ENCODE measurements at regions of chr7 and their contacts with region 1.

Region 1: DNA sequence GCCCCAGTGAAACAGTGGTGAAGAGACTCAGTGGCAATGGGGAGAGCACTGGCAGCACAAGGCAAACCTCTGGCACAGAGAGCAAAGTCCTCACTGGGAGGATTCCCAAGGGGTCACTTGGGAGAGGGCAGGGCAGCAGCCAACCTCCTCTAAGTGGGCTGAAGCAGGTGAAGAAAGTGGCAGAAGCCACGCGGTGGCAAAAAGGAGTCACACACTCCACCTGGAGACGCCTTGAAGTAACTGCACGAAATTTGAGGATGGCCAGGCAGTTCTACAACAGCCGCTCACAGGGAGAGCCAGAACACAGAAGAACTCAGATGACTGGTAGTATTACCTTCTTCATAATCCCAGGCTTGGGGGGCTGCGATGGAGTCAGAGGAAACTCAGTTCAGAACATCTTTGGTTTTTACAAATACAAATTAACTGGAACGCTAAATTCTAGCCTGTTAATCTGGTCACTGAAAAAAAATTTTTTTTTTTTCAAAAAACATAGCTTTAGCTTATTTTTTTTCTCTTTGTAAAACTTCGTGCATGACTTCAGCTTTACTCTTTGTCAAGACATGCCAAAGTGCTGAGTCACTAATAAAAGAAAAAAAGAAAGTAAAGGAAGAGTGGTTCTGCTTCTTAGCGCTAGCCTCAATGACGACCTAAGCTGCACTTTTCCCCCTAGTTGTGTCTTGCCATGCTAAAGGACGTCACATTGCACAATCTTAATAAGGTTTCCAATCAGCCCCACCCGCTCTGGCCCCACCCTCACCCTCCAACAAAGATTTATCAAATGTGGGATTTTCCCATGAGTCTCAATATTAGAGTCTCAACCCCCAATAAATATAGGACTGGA is 435 bp upstream of the IL6 start:
- DNase-seq: peak; percentile 76
- ATAC-seq: peak; percentile 88 to 92
- H3K4me3 ChIP-seq: 0 out of 3 replicates have a peak overlapping the region, but pooled peaks have one; percentile 17
- H3K27ac ChIP-seq: peak overlapping the region; percentile 48 to 84
- H3K4me1 ChIP-seq: peaks cover 28% of the 10 kb centered on the region
- CTCF ChIP-seq: peak; percentile 65
- EP300 ChIP-seq: peak in 1 of 2 experiments; percentile 28; a peak in 1 of 5 replicates
- POLR2A ChIP-seq: no peak
- RAD21 ChIP-seq: peak; percentile 82 to 86

Region 2: DNA sequence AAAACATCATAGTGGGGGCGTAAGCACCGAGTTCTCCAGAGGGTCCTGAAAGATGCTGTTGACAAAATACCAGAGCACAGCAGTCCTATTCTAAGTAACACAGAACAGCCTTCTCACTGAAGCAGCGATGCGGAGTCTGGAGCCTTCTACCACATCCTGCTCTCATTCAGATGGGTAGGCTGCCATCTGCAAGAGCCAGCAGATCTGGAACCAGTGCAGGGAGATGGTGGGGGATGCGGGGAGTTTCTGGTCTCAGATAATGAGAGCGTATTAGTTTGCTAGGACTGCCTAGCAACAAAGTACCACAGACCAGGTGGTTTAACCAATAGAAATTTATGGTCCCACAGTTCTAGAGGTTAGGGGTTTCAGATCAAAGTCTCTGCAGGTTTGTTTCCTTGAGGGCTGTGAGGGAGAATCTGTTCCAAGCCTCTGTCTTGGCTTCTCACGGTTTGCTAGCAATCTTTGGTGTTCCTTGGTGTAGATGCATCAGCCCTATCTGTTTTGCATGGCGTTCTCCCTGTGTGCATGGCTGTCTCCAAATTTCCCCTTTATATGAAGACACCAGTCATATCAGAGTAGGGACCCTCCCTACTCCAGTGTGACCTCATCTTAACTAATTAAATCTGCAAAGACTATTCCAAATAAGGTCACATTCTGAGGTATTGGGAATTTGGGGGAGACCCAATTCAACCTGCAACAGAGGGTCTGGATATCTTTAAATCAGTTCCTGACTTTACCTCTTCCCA is 174.6 kb before region 1 on chr7:
- CTCF ChIA-PET with region 1: interaction called, 477 read pairs
- POLR2A ChIA-PET with region 1: no interaction called
- DNase-seq: no peak
- ATAC-seq: no peak
- H3K4me3 ChIP-seq: no peak overlapping the region
- H3K27ac ChIP-seq: no peak overlapping the region
- H3K4me1 ChIP-seq: 0 out of 3 replicates have a peak, but pooled peaks cover 2% of the 10 kb centered on the region
- CTCF ChIP-seq: no peak
- EP300 ChIP-seq: no peak
- POLR2A ChIP-seq: no peak
- RAD21 ChIP-seq: no peak

Region 3: DNA sequence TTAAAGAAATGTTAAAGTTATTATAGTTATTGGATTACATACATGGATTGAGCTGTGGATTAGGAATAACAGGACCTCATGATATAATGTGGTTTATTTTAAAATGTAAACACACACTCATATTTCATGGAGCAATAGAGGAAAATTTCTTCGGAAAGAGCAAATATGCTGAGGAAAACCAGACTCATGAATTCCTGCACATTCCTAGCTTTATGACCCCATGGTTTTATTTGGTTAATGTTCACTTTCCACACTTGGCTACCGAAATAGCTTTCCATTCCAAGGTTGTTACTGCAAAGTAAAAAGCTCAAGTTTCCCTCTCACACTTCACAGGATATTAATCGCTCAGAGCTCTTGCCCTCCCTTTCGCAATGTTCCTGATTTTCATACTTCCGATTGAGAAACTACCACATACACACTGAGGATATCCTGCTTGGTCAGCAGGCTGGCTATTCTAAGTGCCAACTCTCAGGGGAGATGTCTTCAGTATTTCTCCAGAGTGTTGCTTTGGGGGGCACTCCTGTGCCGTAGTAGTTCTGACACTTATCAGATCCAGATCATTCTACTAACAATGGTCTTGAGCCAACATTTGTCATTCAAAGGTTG is 149.1 kb before region 1 on chr7:
- CTCF ChIA-PET with region 1: interaction called, 22 read pairs
- POLR2A ChIA-PET with region 1: interaction called, 7 read pairs
- DNase-seq: peak in 1 of 2 experiments; percentile 68
- ATAC-seq: peak; percentile 82 to 84
- H3K4me3 ChIP-seq: no peak overlapping the region
- H3K27ac ChIP-seq: peak overlapping the region; percentile 57 to 84
- H3K4me1 ChIP-seq: peaks cover 28% of the 10 kb centered on the region
- CTCF ChIP-seq: 0 out of 3 replicates have a peak, but pooled peaks have one; percentile 10
- EP300 ChIP-seq: peak; percentile 74 to 87; a peak in 3 of 5 replicates
- POLR2A ChIP-seq: no peak
- RAD21 ChIP-seq: peak in 1 of 2 experiments; percentile 41; a peak in 2 of 5 replicates

Region 4: GRCh38 chr7:22586786-22587140 is 139.8 kb before region 1 on chr7:
- CTCF ChIA-PET with region 1: interaction called, 40 read pairs
- POLR2A ChIA-PET with region 1: no interaction called
- DNase-seq: peak in 1 of 2 experiments; percentile 46
- ATAC-seq: peak in 1 of 2 experiments; percentile 72; a peak in 3 of 6 replicates
- H3K4me3 ChIP-seq: no peak overlapping the region
- H3K27ac ChIP-seq: peak overlapping the region in 1 of 2 experiments; percentile 70; a peak in 3 of 6 replicates
- H3K4me1 ChIP-seq: peaks cover 18% of the 10 kb centered on the region
- CTCF ChIP-seq: peak; percentile 36; the same call in 2 of the 3 replicates
- EP300 ChIP-seq: no peak
- POLR2A ChIP-seq: no peak
- RAD21 ChIP-seq: peak; percentile 26 to 34; a peak in 3 of 5 replicates

Region 5: DNA sequence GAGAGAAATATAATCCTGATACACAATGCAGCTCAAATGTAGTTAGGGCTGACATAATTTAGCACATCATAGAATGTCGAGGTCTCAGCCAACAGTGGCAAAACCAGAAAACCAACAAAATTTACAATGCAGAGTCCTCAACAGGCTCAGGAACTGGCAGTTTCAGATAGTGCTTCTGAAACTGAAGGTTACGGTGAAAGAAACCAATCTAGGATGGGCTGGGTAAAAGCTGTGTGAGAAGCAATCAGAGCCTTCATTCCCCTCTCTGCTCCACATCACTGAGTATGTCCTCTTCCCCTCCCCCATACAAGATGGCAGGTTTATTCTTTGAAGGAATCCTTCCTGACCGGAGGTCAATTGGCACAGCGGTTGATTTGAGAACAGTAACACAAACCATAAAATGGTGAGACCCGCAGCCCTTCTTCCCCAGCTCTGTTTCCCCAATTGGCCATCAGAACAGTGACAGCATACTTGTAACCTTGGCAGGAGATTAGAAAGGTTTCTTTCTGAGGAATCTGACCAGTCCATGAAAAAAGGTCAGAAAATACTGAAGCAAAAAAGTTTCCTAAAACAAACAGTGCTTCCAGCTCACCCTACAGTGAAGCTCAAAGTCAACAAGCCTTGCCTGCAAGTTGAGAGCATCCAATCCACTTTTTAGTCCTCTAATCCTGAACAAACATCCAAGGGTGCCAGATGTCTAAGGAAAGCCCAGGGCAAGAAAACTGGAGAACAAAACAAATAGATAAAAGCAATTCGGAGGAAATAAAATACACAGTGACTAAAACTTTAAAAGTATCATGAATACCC is 53.5 kb before region 1 on chr7:
- CTCF ChIA-PET with region 1: interaction called, 57 read pairs
- POLR2A ChIA-PET with region 1: interaction called, 5 read pairs
- DNase-seq: peak; percentile 80 to 94
- ATAC-seq: peak; percentile 97 to 99
- H3K4me3 ChIP-seq: no peak overlapping the region
- H3K27ac ChIP-seq: peak overlapping the region; percentile 67 to 76
- H3K4me1 ChIP-seq: peaks cover 41% of the 10 kb centered on the region
- CTCF ChIP-seq: no peak
- EP300 ChIP-seq: peak; percentile 86 to 88; a peak in 4 of 5 replicates
- POLR2A ChIP-seq: no peak
- RAD21 ChIP-seq: peak in 1 of 2 experiments; percentile 17; a peak in 4 of 5 replicates

Region 6: DNA sequence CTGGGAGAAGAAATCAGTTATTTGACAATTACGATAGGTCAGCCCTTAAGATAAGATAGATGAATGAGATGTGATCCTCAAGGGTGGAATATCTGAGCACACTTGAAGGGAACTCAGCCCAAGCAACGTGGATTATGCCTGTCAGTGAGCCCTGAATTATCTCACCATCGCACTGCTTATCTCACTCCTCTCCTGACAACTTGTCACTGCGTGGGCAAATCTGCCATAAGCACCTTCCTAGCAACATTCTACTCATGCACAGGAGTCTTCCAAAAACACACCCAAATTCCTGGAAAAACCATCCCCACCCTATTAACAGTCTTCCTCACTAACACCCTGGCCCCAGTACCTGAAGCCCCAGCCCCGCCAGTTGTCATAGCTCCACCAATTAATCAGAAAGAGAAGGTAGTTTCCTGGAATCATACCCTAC is 46.1 kb before region 1 on chr7:
- CTCF ChIA-PET with region 1: interaction called, 13 read pairs
- POLR2A ChIA-PET with region 1: no interaction called
- DNase-seq: no peak
- ATAC-seq: no peak
- H3K4me3 ChIP-seq: no peak overlapping the region
- H3K27ac ChIP-seq: no peak overlapping the region
- H3K4me1 ChIP-seq: no peaks in the 10 kb centered on the region
- CTCF ChIP-seq: no peak
- EP300 ChIP-seq: no peak
- POLR2A ChIP-seq: no peak
- RAD21 ChIP-seq: no peak

Region 7: GRCh38 chr7:22751341-22751740 is 24.8 kb after region 1 on chr7:
- CTCF ChIA-PET with region 1: interaction called, 11 read pairs
- POLR2A ChIA-PET with region 1: no interaction called
- DNase-seq: no peak
- ATAC-seq: no peak
- H3K4me3 ChIP-seq: no peak overlapping the region
- H3K27ac ChIP-seq: no peak overlapping the region
- H3K4me1 ChIP-seq: no peaks in the 10 kb centered on the region
- CTCF ChIP-seq: no peak
- EP300 ChIP-seq: no peak
- POLR2A ChIP-seq: no peak
- RAD21 ChIP-seq: no peak